ENCODE measurements at regions of chr5 and their contacts with region 1.

Region 1: GRCh38 chr5:142145106-142145900 is 36.7 kb downstream of the NDFIP1 start:
- DNase-seq: peak; percentile 70
- ATAC-seq: peak; percentile 98
- H3K4me3 Mint-ChIP-seq: no peak overlapping the region
- H3K27ac Mint-ChIP-seq: no peak overlapping the region
- H3K4me1 Mint-ChIP-seq: 0 out of 2 replicates have a peak, but pooled peaks cover 1% of the 10 kb centered on the region
- H3K27me3 Mint-ChIP-seq: no peaks in the 10 kb centered on the region
- CTCF ChIP-seq: no peak; the same call in 1 of the 2 replicates

Region 2: DNA sequence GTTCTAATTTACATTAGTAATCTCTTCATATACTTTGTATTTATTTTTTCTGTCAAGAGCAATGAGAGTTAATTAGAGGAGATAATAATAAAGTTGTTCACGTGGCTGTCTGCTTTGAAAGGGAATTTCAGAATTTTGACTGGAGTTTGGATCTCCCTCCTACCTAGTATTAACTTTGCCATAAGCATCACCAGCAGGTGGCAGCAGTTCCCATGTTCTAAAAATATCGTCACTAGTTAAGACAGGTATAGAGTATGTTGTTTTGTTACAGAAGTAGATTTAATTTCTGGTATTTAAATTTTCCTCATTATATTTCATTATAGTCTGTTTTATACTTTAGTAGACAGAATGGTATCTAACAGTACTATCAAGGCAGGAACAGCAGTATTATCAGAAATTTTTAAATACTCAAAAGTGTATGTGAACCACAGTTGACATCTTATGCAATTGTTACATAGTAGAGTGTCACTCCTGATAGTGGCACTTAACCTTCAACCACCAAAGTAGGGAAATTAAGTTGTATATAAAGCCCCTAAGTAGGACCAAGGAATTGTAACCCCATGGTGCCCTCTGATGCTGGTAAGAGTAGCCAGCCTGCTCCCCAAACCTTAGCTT is 152.8 kb before region 1 on chr5:
- CTCF ChIA-PET with region 1: interaction called, 48 read pairs
- POLR2A ChIA-PET with region 1: no interaction called
- DNase-seq: peak; percentile 78
- ATAC-seq: peak; percentile 50
- H3K4me3 Mint-ChIP-seq: no peak overlapping the region
- H3K27ac Mint-ChIP-seq: no peak overlapping the region
- H3K4me1 Mint-ChIP-seq: no peaks in the 10 kb centered on the region
- H3K27me3 Mint-ChIP-seq: no peaks in the 10 kb centered on the region
- CTCF ChIP-seq: peak; percentile 62

Region 3: GRCh38 chr5:142048272-142048671 is 97.0 kb before region 1 on chr5:
- CTCF ChIA-PET with region 1: interaction called, 20 read pairs
- POLR2A ChIA-PET with region 1: no interaction called
- DNase-seq: peak; percentile 36
- ATAC-seq: peak; percentile 85
- H3K4me3 Mint-ChIP-seq: no peak overlapping the region
- H3K27ac Mint-ChIP-seq: peak overlapping the region; percentile 58
- H3K4me1 Mint-ChIP-seq: peaks cover 18% of the 10 kb centered on the region
- H3K27me3 Mint-ChIP-seq: 0 out of 2 replicates have a peak, but pooled peaks cover 4% of the 10 kb centered on the region
- CTCF ChIP-seq: no peak